AG04449 (cell line): ENCODE measurements at regions of chr3 and their contacts with region 1.

Region 1: GRCh38 chr3:45182915-45183867 is 37.0 kb upstream of the CDCP1 start:
- DNase-seq: no peak
- H3K4me3 ChIP-seq: no peak overlapping the region
- CTCF ChIP-seq: no peak

Region 2: DNA sequence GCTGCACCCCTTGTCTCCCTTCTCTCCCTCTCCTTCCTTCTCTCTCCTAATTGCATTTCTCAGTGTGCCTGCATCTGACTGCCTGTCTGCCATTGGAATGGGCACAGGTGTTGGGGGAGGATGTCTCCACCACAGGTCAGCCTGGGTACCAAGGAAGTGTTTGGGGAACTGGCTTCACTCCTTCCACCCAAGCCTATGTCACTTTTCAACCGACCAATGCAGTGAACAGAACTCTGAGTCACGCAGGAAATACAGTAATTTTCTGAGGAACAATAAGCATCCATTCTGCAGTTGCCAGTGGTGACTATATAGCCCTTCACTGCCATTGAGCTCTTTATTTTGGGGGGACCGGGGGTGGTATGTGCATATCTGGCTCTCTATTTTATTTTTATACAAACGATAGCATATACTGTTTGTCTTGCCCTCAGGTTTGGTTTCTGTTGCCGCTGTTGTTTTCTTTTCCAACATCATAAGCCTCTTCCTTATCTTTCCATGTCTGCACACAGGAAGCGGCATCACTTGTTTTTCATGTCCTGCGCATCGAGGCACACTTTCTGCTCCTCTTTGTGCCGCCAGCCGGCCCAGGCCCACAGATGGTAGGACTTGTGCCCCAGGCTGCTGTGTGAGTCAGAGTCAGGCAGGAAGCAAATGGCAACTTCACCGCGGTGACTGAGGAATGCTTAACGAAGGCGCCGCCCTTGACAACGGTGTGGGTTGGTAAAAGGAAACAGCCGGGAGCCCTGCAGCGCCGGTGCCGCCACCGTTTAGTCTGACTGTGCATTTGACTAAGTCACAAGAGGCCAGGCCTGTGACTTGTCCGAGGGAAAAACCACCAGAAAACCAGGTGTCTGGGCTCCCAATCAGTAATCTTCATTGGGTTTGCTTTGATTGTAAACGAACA is 15.9 kb before region 1 on chr3:
- CTCF ChIA-PET with region 1: interaction called, 12 read pairs
- POLR2A ChIA-PET with region 1: no interaction called
- DNase-seq: peak; percentile 71
- H3K4me3 ChIP-seq: peak overlapping the region; percentile 9; the same call in 1 of the 2 replicates
- CTCF ChIP-seq: no peak

Region 3: GRCh38 chr3:45218578-45219390 is 35.6 kb after region 1 on chr3:
- CTCF ChIA-PET with region 1: no interaction called
- POLR2A ChIA-PET with region 1: no interaction called
- DNase-seq: no peak
- H3K4me3 ChIP-seq: no peak overlapping the region
- CTCF ChIP-seq: no peak